ENCODE measurements at regions of chr3 and their contacts with region 1.

Region 1: DNA sequence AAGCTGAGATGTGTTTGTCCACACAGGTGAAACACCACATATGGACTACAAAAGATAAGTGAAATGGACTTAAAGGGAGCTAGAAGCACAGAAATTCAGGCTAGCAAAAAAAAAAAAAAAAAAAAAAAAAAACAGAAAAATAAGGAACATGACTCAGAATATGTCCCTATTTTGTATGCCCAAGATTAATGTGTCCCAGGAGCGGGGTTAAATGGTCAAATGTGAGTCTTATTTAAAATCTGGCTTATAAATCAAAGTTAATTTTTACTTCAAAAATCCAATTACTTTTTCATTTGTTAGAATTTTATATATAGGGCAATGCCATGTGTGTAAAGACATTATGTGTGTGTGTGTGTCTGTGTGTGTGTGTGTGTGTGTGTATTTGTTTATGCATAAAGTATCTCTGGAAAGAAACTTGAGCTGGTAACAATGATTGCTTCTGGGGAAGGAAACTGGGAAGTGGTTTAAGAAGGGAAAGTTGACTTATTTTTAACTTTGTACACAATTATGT is 986.5 kb downstream of the ROBO2 start:
- DNase-seq: no peak
- ATAC-seq: no peak
- H3K4me3 ChIP-seq: no peak overlapping the region
- H3K27ac ChIP-seq: no peak overlapping the region
- H3K4me1 ChIP-seq: no peaks in the 10 kb centered on the region
- H3K27me3 ChIP-seq: no peaks in the 10 kb centered on the region
- CTCF ChIP-seq: no peak
- EP300 ChIP-seq: no peak
- POLR2A ChIP-seq: no peak
- RAD21 ChIP-seq: no peak

Region 2: GRCh38 chr3:78066286-78066685 is 39.9 kb after region 1 on chr3:
- CTCF ChIA-PET with region 1: no interaction called
- POLR2A ChIA-PET with region 1: interaction called, 11 read pairs
- RAD21 ChIA-PET with region 1: no interaction called
- SMC1A ChIA-PET with region 1: no interaction called
- in situ Hi-C with region 1: no loop called
- intact Hi-C with region 1: no loop called
- DNase-seq: no peak
- ATAC-seq: peak; percentile 51; the same call in 1 of the 3 replicates
- H3K4me3 ChIP-seq: no peak overlapping the region
- H3K27ac ChIP-seq: no peak overlapping the region
- H3K4me1 ChIP-seq: no peaks in the 10 kb centered on the region
- H3K27me3 ChIP-seq: no peaks in the 10 kb centered on the region
- CTCF ChIP-seq: peak in 1 of 3 experiments; percentile 22; a peak in 1 of 6 replicates
- EP300 ChIP-seq: no peak
- POLR2A ChIP-seq: no peak
- RAD21 ChIP-seq: no peak

Region 3: GRCh38 chr3:78086150-78086549 is 59.8 kb after region 1 on chr3:
- CTCF ChIA-PET with region 1: no interaction called
- POLR2A ChIA-PET with region 1: no interaction called
- RAD21 ChIA-PET with region 1: no interaction called
- SMC1A ChIA-PET with region 1: no interaction called
- in situ Hi-C with region 1: no loop called
- intact Hi-C with region 1: no loop called
- DNase-seq: no peak
- ATAC-seq: no peak
- H3K4me3 ChIP-seq: no peak overlapping the region
- H3K27ac ChIP-seq: no peak overlapping the region
- H3K4me1 ChIP-seq: no peaks in the 10 kb centered on the region
- H3K27me3 ChIP-seq: no peaks in the 10 kb centered on the region; a peak in 1 of 4 replicates
- CTCF ChIP-seq: no peak
- EP300 ChIP-seq: no peak
- POLR2A ChIP-seq: no peak
- RAD21 ChIP-seq: no peak

Measured in GM12878 (cell line).